MCF 10A (cell line): ENCODE measurements at regions of chr1 and their contacts with region 1.

Region 1: DNA sequence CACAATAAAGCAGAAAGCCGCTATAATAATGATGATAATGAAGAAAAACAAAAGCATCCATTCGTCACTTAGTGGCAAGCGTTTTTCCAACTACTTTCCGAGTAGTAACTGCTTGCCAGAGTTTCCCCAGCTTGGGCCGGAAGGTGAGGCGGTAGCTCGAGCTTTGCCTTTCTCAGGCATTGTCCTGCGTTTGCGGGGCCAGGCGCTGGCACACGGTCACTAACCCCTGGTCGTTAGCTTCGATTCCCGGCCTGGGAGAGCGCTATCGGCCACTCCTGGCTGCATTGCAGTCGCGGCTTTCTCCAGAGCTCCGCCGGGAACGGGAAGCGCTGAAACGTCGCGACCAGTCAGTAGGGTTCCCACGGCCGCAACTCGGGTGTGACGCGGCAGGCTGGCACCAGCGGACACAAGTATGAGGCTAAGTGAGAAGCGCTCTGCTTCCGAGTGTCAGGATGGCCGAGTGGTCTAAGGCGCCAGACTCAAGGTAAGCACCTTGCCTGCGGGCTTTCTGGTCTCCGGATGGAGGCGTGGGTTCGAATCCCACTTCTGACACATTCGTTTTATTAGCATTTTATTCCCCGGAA is 14.6 kb upstream of the ZNF692 start:
- DNase-seq: peak; percentile 100
- H3K4me3 Mint-ChIP-seq: peak overlapping the region; percentile 94
- H3K27ac Mint-ChIP-seq: peak overlapping the region; percentile 97
- H3K4me1 Mint-ChIP-seq: peaks cover 19% of the 10 kb centered on the region
- H3K27me3 Mint-ChIP-seq: peaks cover 12% of the 10 kb centered on the region
- CTCF ChIP-seq: no peak

Region 2: DNA sequence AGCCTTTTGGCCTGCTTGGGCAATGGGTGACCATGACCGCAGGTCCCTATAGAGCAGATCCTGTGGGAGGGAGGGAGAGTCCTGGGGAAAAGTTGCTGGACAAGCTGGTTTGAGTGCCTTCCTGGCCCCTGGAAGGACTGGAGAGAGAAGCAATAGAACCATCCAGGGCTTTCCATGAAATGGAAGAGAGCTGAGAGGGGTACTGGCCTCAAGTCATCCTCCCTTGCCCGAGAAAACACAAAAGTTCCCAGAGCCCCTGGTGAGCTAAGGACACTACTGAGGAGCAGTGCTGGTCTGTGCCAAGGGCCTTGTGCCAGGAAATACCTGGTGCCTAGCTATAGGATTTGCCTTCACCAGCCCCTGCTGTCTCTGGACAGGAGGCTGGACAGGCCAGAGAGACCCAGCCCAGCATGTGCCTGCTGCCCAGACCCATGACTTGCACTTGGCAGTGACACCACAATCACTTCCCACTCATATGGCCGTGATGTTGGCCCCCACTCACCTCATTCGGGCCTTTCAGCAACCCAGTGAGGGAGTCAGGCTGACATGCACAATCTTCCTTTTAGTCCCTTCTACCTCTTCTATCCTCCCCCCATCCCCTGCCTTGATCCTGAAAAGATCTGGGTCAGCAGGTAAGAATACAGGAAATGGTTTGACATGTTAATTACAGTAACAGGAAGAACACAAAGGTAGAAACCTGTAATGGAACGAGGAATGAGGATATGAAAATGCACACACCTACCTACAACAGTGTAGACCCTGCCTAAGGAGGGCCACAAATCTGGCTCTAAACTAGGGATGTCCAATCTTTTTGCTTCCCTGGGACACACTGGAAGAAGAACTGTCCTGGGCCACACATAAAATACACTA is 54.8 kb before region 1 on chr1:
- CTCF ChIA-PET with region 1: no interaction called
- POLR2A ChIA-PET with region 1: no interaction called
- intact Hi-C with region 1: no loop called
- DNase-seq: no peak
- H3K4me3 Mint-ChIP-seq: no peak overlapping the region
- H3K27ac Mint-ChIP-seq: peak overlapping the region; percentile 57
- H3K4me1 Mint-ChIP-seq: peaks cover 35% of the 10 kb centered on the region
- H3K27me3 Mint-ChIP-seq: no peaks in the 10 kb centered on the region
- CTCF ChIP-seq: no peak

Region 3: DNA sequence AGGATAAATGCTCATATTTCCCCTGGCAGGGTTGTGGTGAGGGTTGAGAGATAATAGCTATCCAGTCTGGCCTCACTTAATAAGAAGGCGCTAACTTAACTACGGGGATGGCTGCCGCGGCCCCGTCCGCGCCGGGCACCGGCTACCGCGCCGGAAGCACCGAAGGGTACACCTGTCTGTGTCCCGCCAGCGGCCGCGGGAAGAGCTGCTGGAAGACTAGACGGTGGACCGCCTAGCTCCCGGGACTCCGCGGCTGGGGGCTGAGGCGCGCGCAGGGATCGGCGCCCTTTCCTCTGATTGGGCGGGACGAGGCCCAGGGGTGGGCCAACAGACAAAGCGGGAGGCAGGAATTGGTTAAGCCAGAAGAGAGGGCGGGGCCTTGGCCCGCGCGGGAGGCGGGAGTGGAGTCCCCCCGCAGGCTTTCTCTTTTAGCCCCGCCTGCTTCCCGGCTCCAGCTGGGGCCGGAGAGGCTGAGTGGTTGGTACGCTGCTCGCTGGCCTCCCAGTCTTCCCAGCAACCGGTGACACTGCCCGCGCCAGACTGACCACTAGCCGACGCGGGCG is 35.6 kb before region 1 on chr1 and contains the start of gene ZNF672:
- CTCF ChIA-PET with region 1: interaction called, 6 read pairs
- POLR2A ChIA-PET with region 1: interaction called, 79 read pairs
- intact Hi-C with region 1: loop called (anchors 1 kb)
- DNase-seq: peak; percentile 100
- H3K4me3 Mint-ChIP-seq: no peak within 1 kb of the TSS
- H3K27ac Mint-ChIP-seq: no peak within 1 kb of the TSS
- H3K4me1 Mint-ChIP-seq: peaks cover 20% of the 10 kb centered on the region
- H3K27me3 Mint-ChIP-seq: no peaks in the 10 kb centered on the region
- CTCF ChIP-seq: no peak
- total RNA-seq, gene ZNF672: 35.8 and 36.2 TPM in 2 replicates

Region 4: DNA sequence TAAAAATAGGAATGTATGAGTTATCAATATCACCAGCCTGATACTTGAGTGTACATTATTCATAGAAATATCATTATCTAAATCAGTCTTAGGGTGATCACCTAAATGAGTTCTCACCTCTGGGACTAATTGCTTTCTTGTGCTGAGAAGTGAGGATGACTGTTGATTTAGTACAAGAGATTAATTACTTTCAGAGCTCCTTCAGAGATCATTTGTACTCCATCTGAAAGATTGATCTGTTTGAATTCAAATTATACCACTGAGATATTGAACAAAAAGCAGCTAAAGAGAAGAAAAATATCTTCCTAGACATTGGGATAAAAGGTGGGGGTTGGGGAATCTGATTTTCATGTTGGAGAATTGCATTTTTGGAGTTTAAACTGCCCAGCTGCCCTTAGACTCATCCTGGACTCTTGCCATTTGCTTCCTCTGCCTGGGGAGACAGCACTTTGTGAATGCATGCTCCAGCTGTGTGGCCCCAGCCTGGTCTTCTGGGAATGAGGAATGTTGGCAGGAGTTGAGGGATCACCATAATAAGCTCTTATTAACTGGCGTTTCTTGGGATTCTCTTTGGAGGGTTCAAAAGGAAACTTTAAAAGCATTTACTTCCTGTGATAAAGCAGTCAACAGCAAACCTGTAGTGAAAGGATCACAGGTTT is 12.9 kb after region 1 on chr1:
- CTCF ChIA-PET with region 1: interaction called, 12 read pairs
- POLR2A ChIA-PET with region 1: interaction called, 7 read pairs
- intact Hi-C with region 1: no loop called
- DNase-seq: no peak
- H3K4me3 Mint-ChIP-seq: no peak overlapping the region
- H3K27ac Mint-ChIP-seq: no peak overlapping the region
- H3K4me1 Mint-ChIP-seq: peaks cover 13% of the 10 kb centered on the region
- H3K27me3 Mint-ChIP-seq: peaks cover 20% of the 10 kb centered on the region
- CTCF ChIP-seq: no peak

Region 5: GRCh38 chr1:248900637-248901036 is 27.1 kb after region 1 on chr1:
- CTCF ChIA-PET with region 1: interaction called, 11 read pairs
- POLR2A ChIA-PET with region 1: interaction called, 41 read pairs
- intact Hi-C with region 1: no loop called
- DNase-seq: no peak
- H3K4me3 Mint-ChIP-seq: no peak overlapping the region
- H3K27ac Mint-ChIP-seq: no peak overlapping the region
- H3K4me1 Mint-ChIP-seq: no peaks in the 10 kb centered on the region
- H3K27me3 Mint-ChIP-seq: peaks cover 83% of the 10 kb centered on the region
- CTCF ChIP-seq: no peak

Region 6: GRCh38 chr1:248906009-248906752 is 32.7 kb after region 1 on chr1 and contains the start of gene PGBD2:
- CTCF ChIA-PET with region 1: interaction called, 11 read pairs
- POLR2A ChIA-PET with region 1: interaction called, 41 read pairs
- intact Hi-C with region 1: loop called (anchors 1 kb)
- DNase-seq: peak; percentile 96
- H3K4me3 Mint-ChIP-seq: peak within 1 kb of the TSS; percentile 89
- H3K27ac Mint-ChIP-seq: peak within 1 kb of the TSS; percentile 91
- H3K4me1 Mint-ChIP-seq: peaks cover 27% of the 10 kb centered on the region
- H3K27me3 Mint-ChIP-seq: peaks cover 39% of the 10 kb centered on the region
- CTCF ChIP-seq: peak; percentile 86
- total RNA-seq, gene PGBD2: 5.2 and 5.9 TPM in 2 replicates